ENCODE measurements at regions of chr18 and their contacts with region 1.

Region 1: DNA sequence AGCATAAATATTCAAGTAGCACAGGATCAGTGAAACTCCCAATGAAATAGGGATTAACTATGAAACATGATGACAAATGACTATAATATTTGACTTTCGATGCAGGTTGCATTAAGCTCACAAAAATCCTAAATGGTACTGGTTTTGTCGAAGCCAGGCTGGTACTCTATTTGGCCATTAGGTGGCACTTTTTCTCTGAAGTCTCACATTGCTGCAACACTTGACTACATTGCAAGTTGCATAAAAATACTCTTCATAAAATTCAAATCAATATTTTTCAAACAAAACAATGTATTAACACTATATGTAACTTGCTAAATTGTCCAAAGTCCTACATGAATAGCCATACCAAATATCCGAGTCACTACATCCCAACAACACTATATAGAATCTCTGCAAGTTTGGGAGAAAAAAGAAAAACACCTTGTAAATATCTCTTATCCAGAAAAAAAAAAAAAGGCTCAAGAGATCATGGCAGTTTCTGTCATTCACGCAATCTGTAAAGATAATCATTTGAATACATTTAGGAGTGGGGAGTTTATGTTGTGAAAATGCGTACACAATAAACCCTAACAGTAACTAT is 9.5 kb downstream of the RTTN start:
- DNase-seq: no peak
- ATAC-seq: peak; percentile 94

Region 2: GRCh38 chr18:69774831-69775230 is 421.1 kb before region 1 on chr18:
- intact Hi-C with region 1: no loop called
- DNase-seq: no peak
- ATAC-seq: no peak

Region 3: GRCh38 chr18:70431203-70431624 is 235.3 kb after region 1 on chr18:
- intact Hi-C with region 1: loop called (anchors 5 kb)
- DNase-seq: no peak
- ATAC-seq: no peak

Measured in Right ventricle myocardium superior (tissue), 1 donor.